ENCODE measurements at regions of chr4 and their contacts with region 1.

Region 1: DNA sequence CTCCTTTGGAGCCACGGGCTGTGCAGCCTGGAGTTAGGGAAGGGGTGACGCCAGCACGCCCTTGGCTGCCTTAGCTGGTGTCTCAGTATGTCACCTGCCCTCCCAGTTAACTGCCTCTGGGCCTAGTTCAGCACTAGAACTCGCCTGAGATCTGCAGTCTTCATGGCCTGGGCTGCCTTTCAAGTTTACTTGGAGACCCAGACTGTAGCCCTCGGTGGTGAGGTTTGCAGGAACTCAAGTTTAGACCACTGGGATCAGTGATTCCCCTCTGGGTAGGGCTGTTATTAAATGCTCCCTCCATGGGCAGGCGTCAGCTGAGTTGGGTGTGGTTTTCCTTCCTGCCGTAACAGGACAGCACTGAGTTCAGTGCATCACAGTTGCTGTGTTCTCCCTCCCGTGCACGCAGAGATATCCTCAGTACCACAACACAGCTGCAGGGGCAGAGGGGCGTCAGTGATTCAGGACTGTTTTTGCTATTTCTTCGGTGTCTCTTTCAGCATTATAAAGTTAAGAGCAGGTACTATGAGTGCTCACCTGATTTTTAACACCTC is 30.5 kb downstream of the PLAC8 start:
- DNase-seq: peak in 34 of 35 experiments; percentile 7 to 87 (median 71)
- ATAC-seq: peak; percentile 91 to 99 (median 98)
- H3K4me3 ChIP-seq: peak overlapping the region in 1 of 2 donors; percentile 5
- H3K4me3 Mint-ChIP-seq: peak overlapping the region in 2 of 3 donors; percentile 19 to 61
- H3K27ac ChIP-seq: peak overlapping the region; percentile 86
- H3K27ac Mint-ChIP-seq: peak overlapping the region; percentile 77 to 98
- H3K4me1 ChIP-seq: peaks cover 10 to 31% of the 10 kb centered on the region in 2 experiments
- H3K4me1 Mint-ChIP-seq: peaks cover 22 to 48% (median 47%) of the 10 kb centered on the region in 3 donors
- H3K27me3 ChIP-seq: peaks cover 0 to 3% of the 10 kb centered on the region in 2 experiments
- H3K27me3 Mint-ChIP-seq: no peaks in the 10 kb centered on the region

Region 2: GRCh38 chr4:83259586-83259985 is 175.6 kb after region 1 on chr4:
- CTCF ChIA-PET with region 1: interaction called, 9 to 13 read pairs
- POLR2A ChIA-PET with region 1: no interaction called
- DNase-seq: no peak
- ATAC-seq: no peak
- H3K4me3 ChIP-seq: no peak overlapping the region
- H3K4me3 Mint-ChIP-seq: no peak overlapping the region
- H3K27ac ChIP-seq: no peak overlapping the region
- H3K27ac Mint-ChIP-seq: no peak overlapping the region
- H3K4me1 ChIP-seq: peaks cover 0 to 4% of the 10 kb centered on the region in 2 experiments
- H3K4me1 Mint-ChIP-seq: peaks cover 8 to 18% (median 9%) of the 10 kb centered on the region in 3 donors
- H3K27me3 ChIP-seq: no peaks in the 10 kb centered on the region
- H3K27me3 Mint-ChIP-seq: no peaks in the 10 kb centered on the region